CD4-positive, alpha-beta memory T cell (primary cell): ENCODE measurements at regions of chr10 and their contacts with region 1.

Region 1: DNA sequence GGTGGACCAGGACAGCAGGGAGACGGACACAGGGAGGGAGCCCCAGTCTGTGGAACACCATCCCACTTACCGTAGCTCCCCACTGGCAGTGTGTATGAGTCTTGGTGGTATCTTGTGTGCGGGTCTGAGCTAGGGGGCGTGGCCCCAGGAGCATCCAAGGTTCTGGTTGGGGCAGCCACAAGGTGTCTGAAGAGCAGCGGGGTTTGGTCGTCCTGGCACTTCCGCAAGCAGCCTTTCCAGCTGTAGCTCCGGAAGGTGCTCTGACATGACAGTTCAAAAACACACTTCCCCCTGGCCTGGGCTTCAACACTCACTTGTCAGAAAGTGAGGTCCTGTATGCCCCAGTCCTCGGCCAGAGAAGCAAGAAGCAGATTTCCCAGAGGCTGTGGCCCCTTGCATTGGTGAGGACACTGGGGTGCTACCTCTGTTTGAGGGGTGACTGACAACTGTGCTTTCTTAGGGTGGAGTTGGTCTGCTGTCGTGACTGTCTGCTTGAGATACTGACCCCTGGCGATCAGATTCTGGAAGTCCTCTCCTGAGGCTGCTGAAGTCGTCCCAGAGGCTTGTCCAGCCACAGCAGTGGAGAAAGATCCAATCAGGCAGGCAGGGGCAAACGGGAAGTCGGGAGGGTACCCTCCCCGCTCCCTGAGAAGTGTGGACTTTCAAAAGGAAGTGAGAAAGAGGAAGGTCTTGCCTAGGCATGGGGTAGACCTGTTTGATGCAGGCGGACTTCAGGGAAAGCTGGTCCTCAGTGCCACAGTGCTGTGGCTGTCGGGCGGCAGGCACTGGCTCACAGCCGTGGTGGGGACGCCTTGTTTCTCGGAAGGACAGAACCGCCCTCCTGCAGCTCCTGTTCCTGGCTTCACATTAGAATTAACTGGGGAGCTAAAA is 51.4 kb upstream of the PFKFB3 start:
- DNase-seq: peak in 4 of 5 donors; percentile 46 to 64 (median 56)
- H3K4me3 ChIP-seq: no peak overlapping the region
- H3K4me3 Mint-ChIP-seq: peak overlapping the region in 7 of 8 donors; percentile 36 to 75 (median 58)
- H3K27ac ChIP-seq: peak overlapping the region; percentile 1
- H3K27ac Mint-ChIP-seq: peak overlapping the region; percentile 86 to 93 (median 91)
- H3K4me1 ChIP-seq: peaks cover 47% of the 10 kb centered on the region
- H3K4me1 Mint-ChIP-seq: peaks cover 36 to 81% (median 49%) of the 10 kb centered on the region in 4 donors
- H3K27me3 ChIP-seq: no peaks in the 10 kb centered on the region
- H3K27me3 Mint-ChIP-seq: no peaks in the 10 kb centered on the region

Region 2: GRCh38 chr10:5752301-5752871 is 398.9 kb before region 1 on chr10:
- CTCF ChIA-PET with region 1: no interaction called
- POLR2A ChIA-PET with region 1: no interaction called
- intact Hi-C with region 1: no loop called
- DNase-seq: no peak
- H3K4me3 ChIP-seq: no peak overlapping the region
- H3K4me3 Mint-ChIP-seq: no peak overlapping the region
- H3K27ac ChIP-seq: no peak overlapping the region
- H3K27ac Mint-ChIP-seq: peak overlapping the region in 5 of 7 donors; percentile 21 to 80 (median 53)
- H3K4me1 ChIP-seq: no peaks in the 10 kb centered on the region
- H3K4me1 Mint-ChIP-seq: peaks cover 14 to 51% (median 28%) of the 10 kb centered on the region in 4 donors
- H3K27me3 ChIP-seq: no peaks in the 10 kb centered on the region
- H3K27me3 Mint-ChIP-seq: no peaks in the 10 kb centered on the region

Region 3: DNA sequence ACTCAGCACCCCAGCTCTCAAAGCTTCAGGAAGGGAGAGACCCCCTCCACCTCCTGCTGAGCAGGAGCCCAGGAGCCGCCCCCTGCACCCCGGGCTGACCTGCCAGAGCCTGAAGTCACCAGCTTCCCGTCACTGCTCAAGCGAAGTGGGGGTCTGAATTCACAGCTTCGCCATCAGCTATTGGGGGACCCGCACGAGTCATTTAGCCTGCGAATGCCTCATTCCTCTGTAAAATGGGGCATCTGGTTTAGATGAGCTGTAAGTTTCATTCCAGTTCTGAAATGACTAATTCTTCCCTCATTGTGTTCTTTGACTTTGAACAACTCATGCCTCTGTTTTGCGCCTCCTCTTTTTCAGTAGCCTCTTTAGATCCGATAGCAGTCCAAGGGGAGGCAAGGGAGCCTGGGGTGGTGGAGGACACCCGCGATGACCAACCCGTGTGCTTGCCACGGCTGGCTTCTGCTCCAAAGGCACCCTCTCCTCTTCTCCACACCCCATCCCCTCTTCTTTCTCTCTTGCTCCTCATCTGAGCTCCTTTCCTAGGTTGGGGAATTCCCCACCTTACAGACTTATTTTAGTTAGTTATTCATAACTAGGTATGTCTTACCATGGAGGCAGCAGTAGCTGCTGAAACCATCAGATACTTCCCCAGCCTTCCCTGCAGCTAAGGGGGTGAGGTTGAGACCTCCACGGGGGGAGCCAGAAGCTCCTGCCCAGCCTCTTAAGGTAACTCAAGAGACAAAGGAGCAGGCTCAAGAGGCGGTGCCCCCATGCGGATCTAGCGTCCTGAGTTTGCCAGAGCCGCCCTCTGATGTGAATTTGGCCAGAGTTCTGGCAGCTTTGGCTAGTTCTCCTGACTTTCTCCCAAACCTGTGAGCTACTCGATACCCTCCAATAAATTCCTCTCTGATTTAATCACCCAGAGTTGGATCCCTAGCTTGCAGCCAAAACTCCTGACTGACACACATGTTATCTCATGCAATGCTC is 14.8 kb before region 1 on chr10:
- CTCF ChIA-PET with region 1: interaction called, 43 read pairs
- POLR2A ChIA-PET with region 1: interaction called, 10 read pairs
- intact Hi-C with region 1: no loop called
- DNase-seq: peak in 1 of 5 donors; percentile 61
- H3K4me3 ChIP-seq: no peak overlapping the region
- H3K4me3 Mint-ChIP-seq: peak overlapping the region in 7 of 8 donors; percentile 36 to 79 (median 63)
- H3K27ac ChIP-seq: peak overlapping the region; percentile 27
- H3K27ac Mint-ChIP-seq: peak overlapping the region; percentile 59 to 95 (median 89)
- H3K4me1 ChIP-seq: peaks cover 53% of the 10 kb centered on the region
- H3K4me1 Mint-ChIP-seq: peaks cover 43 to 64% (median 56%) of the 10 kb centered on the region in 4 donors
- H3K27me3 ChIP-seq: no peaks in the 10 kb centered on the region
- H3K27me3 Mint-ChIP-seq: no peaks in the 10 kb centered on the region

Region 4: GRCh38 chr10:6409971-6410651 is 258.8 kb after region 1 on chr10:
- CTCF ChIA-PET with region 1: interaction called, 15 read pairs
- POLR2A ChIA-PET with region 1: interaction called, 3 read pairs
- intact Hi-C with region 1: no loop called
- DNase-seq: peak; percentile 71 to 84 (median 79)
- H3K4me3 ChIP-seq: peak overlapping the region; percentile 11 to 34
- H3K4me3 Mint-ChIP-seq: peak overlapping the region; percentile 76 to 93 (median 81)
- H3K27ac ChIP-seq: peak overlapping the region; percentile 78
- H3K27ac Mint-ChIP-seq: peak overlapping the region; percentile 93 to 99 (median 98)
- H3K4me1 ChIP-seq: peaks cover 50% of the 10 kb centered on the region
- H3K4me1 Mint-ChIP-seq: peaks cover 31 to 66% (median 44%) of the 10 kb centered on the region in 4 donors
- H3K27me3 ChIP-seq: no peaks in the 10 kb centered on the region
- H3K27me3 Mint-ChIP-seq: no peaks in the 10 kb centered on the region